Endothelial cell of umbilical vein (primary cell): ENCODE measurements at regions of chr12 and their contacts with region 1.

Region 1: DNA sequence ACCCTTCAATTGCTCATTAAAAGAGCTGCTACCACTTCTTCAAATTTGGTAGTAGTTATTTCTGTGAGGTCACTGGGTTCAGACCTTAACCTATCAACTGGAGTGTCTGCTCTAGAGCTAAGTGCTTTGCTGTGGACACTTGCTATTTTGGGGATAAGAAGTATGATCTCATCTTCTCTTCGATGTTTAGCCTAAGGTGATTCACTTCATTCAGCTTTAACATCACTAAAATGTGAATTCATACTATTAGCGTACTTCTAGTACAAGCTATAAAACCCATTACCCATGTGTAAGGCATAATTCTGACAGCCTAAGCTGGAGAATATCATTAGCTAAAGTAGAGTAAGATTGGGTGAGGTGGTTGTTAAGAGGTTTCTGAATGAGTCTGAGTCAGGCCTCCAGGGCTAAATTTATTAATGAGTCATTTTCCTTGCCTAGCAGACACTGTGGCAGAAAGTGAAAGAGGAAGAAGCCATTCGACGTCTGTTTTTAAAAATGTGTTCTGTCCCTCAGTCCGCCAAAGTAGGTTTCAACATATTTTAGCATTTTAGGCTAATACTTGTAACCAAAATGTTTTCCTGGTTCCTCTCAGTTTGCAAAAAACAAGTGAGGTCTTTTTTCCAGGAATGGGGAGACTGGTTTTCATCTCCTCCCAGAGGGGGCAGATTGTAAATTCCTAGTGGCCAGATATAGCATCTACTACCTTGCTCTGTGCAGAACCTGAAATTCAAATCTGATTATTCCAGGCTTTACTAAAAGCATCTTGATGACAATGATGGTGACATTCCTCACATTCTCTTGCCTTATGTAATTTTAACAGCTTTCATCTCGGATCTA is 103.6 kb downstream of the SSPN start:
- DNase-seq: peak; percentile 80
- H3K4me3 ChIP-seq: peak overlapping the region in 1 of 3 experiments; percentile 66
- H3K27ac ChIP-seq: peak overlapping the region; percentile 71
- H3K4me1 ChIP-seq: peaks cover 7% of the 10 kb centered on the region
- H3K27me3 ChIP-seq: no peaks in the 10 kb centered on the region
- CTCF ChIP-seq: peak; percentile 25 to 39
- POLR2A ChIP-seq: no peak

Region 2: GRCh38 chr12:26318661-26319068 is 19.7 kb after region 1 on chr12:
- CTCF ChIA-PET with region 1: interaction called, 12 read pairs
- POLR2A ChIA-PET with region 1: no interaction called
- dilution Hi-C with region 1: no loop called
- intact Hi-C with region 1: no loop called
- DNase-seq: peak; percentile 44
- H3K4me3 ChIP-seq: no peak overlapping the region
- H3K27ac ChIP-seq: peak overlapping the region; percentile 72
- H3K4me1 ChIP-seq: peaks cover 13% of the 10 kb centered on the region
- H3K27me3 ChIP-seq: no peaks in the 10 kb centered on the region
- CTCF ChIP-seq: no peak
- POLR2A ChIP-seq: no peak